ENCODE measurements at regions of chr9 and their contacts with region 1.

Region 1: GRCh38 chr9:113095561-113095960 is 39.0 kb upstream of the ZFP37 start:
- DNase-seq: no peak
- ATAC-seq: no peak
- H3K4me3 ChIP-seq: peak overlapping the region in 1 of 2 donors; percentile 8
- H3K27ac ChIP-seq: no peak overlapping the region
- H3K4me1 ChIP-seq: no peaks in the 10 kb centered on the region
- H3K27me3 ChIP-seq: peaks cover 0 to 2% of the 10 kb centered on the region in 2 donors

Region 2: DNA sequence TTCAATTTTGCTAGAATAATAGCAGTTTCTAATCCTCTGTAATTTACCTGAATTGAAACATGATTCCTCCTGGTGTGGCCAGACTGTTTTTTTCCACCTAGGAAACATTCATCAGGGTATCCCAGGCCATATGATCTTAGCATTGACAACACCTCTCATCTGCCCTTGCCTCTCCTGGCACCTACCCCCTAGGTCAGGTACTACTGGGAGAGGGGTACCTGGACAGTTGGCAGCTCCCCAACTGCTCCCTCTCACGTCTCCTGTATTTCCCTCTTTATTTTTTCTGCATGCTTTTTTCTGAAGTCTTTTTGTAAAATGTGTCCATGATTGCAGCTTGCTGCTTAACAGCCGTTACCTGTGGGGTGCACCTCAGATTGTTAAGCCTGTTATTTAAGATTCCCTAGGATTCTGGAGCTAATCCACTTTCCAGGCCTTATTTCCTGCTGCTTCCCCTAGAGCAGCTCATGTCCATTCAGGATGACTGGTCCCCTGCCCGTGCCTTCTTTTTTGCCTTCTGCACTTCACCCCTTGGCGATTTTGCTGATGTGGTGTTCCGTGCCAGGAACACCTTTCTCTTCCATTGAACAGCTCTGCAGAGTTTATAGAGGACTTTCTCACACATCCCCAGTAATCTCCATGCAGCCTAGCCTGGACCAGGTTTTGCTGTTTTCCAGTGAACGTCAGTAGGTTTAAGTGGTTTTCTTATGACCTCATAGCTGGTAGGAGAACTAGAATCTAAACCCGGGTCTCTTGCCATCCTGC is 311.4 kb before region 1 on chr9:
- intact Hi-C with region 1: no loop called
- DNase-seq: no peak
- ATAC-seq: peak; percentile 44
- H3K4me3 ChIP-seq: no peak overlapping the region
- H3K27ac ChIP-seq: no peak overlapping the region
- H3K4me1 ChIP-seq: peaks cover 3 to 4% of the 10 kb centered on the region in 2 donors
- H3K27me3 ChIP-seq: no peaks in the 10 kb centered on the region

Region 3: GRCh38 chr9:112905084-112905483 is 190.5 kb before region 1 on chr9:
- intact Hi-C with region 1: no loop called
- DNase-seq: no peak
- ATAC-seq: no peak
- H3K4me3 ChIP-seq: no peak overlapping the region
- H3K27ac ChIP-seq: no peak overlapping the region
- H3K4me1 ChIP-seq: no peaks in the 10 kb centered on the region
- H3K27me3 ChIP-seq: no peaks in the 10 kb centered on the region

Region 4: GRCh38 chr9:113005777-113006176 is 89.8 kb before region 1 on chr9:
- intact Hi-C with region 1: no loop called
- DNase-seq: no peak
- ATAC-seq: no peak
- H3K4me3 ChIP-seq: no peak overlapping the region
- H3K27ac ChIP-seq: no peak overlapping the region
- H3K4me1 ChIP-seq: no peaks in the 10 kb centered on the region
- H3K27me3 ChIP-seq: no peaks in the 10 kb centered on the region

Region 5: DNA sequence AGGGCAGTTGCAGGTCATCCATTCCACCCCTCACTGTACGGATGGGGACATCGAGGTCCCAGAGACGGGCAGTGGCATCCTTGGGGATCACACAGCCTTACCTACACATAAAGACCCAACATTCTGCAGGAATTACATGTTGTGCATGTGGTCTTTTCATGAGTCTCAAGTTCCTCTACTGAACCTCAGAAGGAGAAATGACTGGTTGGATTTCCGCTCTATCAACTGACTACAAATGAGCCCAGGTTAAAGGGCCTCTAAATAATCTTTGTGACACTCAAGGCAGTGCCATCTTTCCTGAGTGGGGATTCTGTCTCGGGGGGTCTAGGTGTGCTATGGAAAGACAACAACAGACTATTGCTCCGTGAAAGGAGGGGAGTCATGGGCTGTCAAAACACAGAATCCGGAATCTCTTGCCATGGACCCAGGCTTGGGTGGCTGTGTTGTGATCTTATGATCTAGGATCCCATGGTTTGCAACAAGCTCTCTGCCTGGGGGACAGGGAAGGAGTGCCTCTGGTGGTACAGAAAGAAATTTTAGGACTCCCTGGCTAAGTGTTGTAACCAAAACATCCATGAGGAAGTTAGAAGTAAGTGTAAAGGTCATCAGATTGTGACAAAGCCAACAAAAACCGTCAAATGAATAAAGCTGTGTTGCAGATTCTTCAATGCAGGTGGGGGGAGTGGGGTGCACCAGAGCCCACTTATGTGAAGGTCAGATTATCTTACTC is 53.4 kb after region 1 on chr9:
- intact Hi-C with region 1: loop called in 1 of 2 experiments (anchors 10 kb)
- DNase-seq: no peak
- ATAC-seq: no peak
- H3K4me3 ChIP-seq: no peak overlapping the region
- H3K27ac ChIP-seq: no peak overlapping the region
- H3K4me1 ChIP-seq: no peaks in the 10 kb centered on the region
- H3K27me3 ChIP-seq: no peaks in the 10 kb centered on the region

Measured in aorta (tissue), 5 donors.